ENCODE measurements at regions of chr3 and their contacts with region 1.

Region 1: DNA sequence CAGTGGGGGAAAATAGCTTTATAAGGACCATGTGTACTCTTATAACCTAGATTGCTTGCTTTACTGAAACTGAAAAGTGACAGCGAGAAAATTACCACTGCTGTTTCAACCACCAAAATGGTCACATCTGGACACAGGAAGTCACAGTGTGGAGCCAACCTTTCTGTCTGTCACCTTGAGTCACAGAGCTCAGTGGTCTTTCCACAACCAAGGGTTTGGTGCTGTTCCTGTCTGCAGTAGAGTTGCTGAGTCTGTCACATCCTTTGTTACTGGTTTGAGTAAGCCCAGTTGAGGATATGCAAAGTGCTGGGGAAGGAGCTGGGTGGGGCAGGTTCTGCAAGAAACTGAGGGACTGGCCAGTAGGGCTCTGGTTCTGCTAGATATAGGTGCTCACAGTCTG is 139.1 kb upstream of the EIF1B start:
- DNase-seq: no peak
- H3K4me3 ChIP-seq: no peak overlapping the region
- H3K27me3 ChIP-seq: no peaks in the 10 kb centered on the region
- CTCF ChIP-seq: no peak

Region 2: GRCh38 chr3:39707314-39707909 is 463.0 kb before region 1 on chr3:
- CTCF ChIA-PET with region 1: no interaction called
- POLR2A ChIA-PET with region 1: interaction called, 14 read pairs
- DNase-seq: no peak
- H3K4me3 ChIP-seq: no peak overlapping the region
- H3K27me3 ChIP-seq: no peaks in the 10 kb centered on the region
- CTCF ChIP-seq: peak; percentile 71